Activated CD8-positive, alpha-beta T cell treated with anti-CD3 and anti-CD28 coated beads, Interleukin-2, amount 10 ng/mL, durations not matched to agents 7 days and 5 days (primary cell): ENCODE measurements at regions of chr19 and their contacts with region 1.

Region 1: GRCh38 chr19:6048808-6049405 is 61.4 kb downstream of the RFX2 start:
- DNase-seq: peak; percentile 82
- ATAC-seq: peak; percentile 99
- H3K4me3 Mint-ChIP-seq: no peak overlapping the region
- H3K27ac Mint-ChIP-seq: no peak overlapping the region
- H3K4me1 Mint-ChIP-seq: peaks cover 5% of the 10 kb centered on the region
- H3K27me3 Mint-ChIP-seq: peaks cover 5% of the 10 kb centered on the region

Region 2: DNA sequence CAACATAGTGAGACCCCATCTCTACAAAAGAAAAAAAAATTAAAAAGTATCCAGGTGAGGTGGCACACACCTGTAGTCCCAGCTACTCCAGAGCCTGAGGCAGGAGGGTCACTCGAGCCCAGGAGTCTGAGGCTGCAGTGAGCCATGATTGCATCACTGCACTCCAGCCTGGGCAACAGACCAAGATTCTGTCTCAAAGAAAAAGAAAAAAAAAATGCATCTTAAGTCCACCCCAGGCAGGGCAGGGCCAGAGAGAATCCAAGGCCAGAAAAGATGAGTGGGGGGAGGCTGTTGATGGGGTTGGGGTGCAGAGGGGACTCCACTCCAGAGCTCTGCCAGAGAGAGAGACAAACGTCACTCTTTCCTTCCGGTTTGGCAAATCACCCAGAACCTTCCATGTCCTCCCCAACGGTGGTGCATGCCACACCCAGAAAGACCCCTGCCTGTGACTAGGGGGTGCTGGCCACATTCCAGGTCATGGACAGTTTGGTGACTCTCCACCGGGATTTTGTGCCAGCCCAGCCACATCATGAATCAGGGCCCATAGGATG is 198.1 kb before region 1 on chr19:
- CTCF ChIA-PET with region 1: no interaction called
- POLR2A ChIA-PET with region 1: no interaction called
- DNase-seq: no peak
- ATAC-seq: no peak
- H3K4me3 Mint-ChIP-seq: no peak overlapping the region
- H3K27ac Mint-ChIP-seq: no peak overlapping the region
- H3K4me1 Mint-ChIP-seq: peaks cover 6% of the 10 kb centered on the region
- H3K27me3 Mint-ChIP-seq: no peaks in the 10 kb centered on the region

Region 3: DNA sequence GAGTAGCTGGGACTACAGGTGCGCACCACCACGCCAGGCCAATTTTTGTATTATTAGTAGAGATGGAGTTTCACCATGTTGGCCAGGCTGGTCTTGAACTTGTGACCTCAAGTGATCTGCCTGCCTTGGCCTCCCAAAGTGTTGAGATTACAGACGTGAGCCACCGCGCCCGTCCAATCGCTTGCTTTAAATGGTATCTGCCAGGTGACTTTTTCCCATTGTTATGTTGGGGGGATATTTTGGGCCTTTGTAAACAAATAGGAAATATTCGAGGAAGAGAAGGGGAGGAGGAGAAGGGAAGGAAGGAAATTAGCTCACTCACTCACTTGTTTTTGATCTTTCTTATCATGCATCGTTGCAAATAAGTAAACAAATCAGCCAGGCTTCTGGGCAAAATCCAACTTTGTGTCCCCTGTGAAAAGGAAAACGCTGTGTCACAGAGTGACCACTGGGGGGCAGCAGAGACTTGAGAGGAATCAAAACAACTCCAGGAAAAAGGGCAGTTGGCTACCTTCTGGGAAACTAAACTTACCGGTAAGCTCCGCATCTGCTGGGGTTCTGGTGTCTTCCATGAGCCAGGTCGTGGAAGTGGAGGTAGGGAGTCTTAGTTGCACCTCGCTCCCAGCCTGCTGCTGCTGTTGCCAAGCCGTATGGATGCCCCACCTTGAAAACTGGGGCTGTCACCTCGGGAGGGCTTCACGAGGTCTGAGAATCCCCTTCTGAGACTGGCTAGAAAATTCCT is 61.7 kb before region 1 on chr19:
- CTCF ChIA-PET with region 1: interaction called, 14 read pairs
- POLR2A ChIA-PET with region 1: no interaction called
- DNase-seq: peak; percentile 83
- ATAC-seq: peak; percentile 57
- H3K4me3 Mint-ChIP-seq: peak overlapping the region; percentile 67
- H3K27ac Mint-ChIP-seq: peak overlapping the region; percentile 66
- H3K4me1 Mint-ChIP-seq: peaks cover 48% of the 10 kb centered on the region
- H3K27me3 Mint-ChIP-seq: no peaks in the 10 kb centered on the region

Region 4: DNA sequence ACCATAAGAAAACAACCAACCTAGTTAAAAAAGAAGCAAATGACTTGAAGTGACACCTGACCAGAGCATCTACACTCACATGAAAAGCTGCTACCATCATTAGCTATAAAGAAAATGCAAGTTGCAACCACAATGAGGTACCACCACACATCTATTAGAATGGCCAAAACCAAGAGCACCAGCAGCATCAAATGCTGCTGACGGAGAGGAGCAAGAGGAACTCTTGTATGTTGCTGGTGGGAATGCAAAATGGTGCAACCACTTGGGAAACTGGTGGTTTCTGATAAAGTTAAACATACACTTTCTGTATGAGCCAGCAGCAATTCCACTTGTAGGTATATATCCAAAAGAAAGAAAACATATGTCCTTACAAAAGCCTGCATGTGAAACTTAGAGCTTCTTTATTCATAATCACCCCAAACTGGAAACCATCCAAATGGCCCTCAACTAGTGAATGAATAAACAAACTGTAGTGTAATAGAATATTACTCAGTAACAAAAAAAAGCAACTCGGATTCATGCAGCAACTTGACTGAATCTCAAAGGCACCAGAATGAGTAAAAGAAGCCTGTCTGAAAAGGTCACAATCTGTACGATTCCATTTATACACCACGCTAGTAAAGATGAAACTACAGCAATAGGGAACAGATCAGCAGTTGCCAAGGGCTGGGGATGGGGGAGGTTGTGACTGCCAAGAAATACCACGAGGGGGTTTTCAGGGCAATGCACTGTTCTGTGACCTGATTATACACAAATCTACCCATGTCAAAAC is 10.1 kb before region 1 on chr19:
- CTCF ChIA-PET with region 1: interaction called, 16 read pairs
- POLR2A ChIA-PET with region 1: no interaction called
- DNase-seq: no peak
- ATAC-seq: no peak
- H3K4me3 Mint-ChIP-seq: no peak overlapping the region
- H3K27ac Mint-ChIP-seq: no peak overlapping the region
- H3K4me1 Mint-ChIP-seq: peaks cover 12% of the 10 kb centered on the region
- H3K27me3 Mint-ChIP-seq: no peaks in the 10 kb centered on the region

Region 5: GRCh38 chr19:6100284-6100915 is 51.5 kb after region 1 on chr19:
- CTCF ChIA-PET with region 1: interaction called, 13 read pairs
- POLR2A ChIA-PET with region 1: no interaction called
- DNase-seq: peak; percentile 61
- ATAC-seq: peak; percentile 61
- H3K4me3 Mint-ChIP-seq: peak overlapping the region; percentile 62
- H3K27ac Mint-ChIP-seq: peak overlapping the region; percentile 85
- H3K4me1 Mint-ChIP-seq: peaks cover 16% of the 10 kb centered on the region
- H3K27me3 Mint-ChIP-seq: no peaks in the 10 kb centered on the region

Region 6: DNA sequence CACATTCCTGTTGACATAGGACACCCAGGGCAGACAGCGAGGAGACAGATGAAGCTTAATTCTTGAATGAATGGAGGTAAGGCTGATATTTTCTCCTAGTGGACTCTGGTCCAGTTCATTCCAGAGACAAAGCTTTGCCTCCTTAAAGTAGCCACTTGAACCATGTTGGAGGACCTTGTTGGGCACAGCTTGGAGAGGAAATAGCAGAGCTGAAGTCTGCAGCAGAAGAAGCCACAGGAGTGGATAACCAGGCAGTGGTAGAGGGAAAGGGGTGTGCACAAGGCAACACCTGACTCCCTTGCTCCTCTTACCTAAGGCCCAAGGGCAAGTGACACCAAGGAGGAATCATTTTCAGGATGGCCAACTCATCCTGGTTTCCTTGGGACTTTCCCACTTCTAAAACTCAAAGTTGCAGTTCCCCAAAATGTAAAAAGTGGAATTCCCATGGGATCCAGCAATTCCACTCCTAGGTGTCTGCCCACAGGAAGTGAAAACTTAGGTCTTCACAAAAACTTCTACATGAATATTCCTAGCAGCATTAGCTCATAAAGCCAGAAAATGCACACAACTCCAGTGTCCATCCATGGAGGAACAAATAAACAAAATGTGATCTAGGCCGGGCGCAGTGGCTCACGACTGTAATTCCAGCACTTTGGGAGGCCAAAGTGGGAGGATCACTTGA is 68.0 kb after region 1 on chr19:
- CTCF ChIA-PET with region 1: interaction called, 13 read pairs
- POLR2A ChIA-PET with region 1: no interaction called
- DNase-seq: no peak
- ATAC-seq: no peak
- H3K4me3 Mint-ChIP-seq: no peak overlapping the region
- H3K27ac Mint-ChIP-seq: no peak overlapping the region
- H3K4me1 Mint-ChIP-seq: peaks cover 2% of the 10 kb centered on the region
- H3K27me3 Mint-ChIP-seq: peaks cover 10% of the 10 kb centered on the region